ENCODE measurements at regions of chr18 and their contacts with region 1.

Region 1: GRCh38 chr18:5073026-5073944 is 123.8 kb downstream of the AKAIN1 start:
- DNase-seq: peak; percentile 32
- ATAC-seq: no peak
- H3K4me3 ChIP-seq: no peak overlapping the region
- H3K4me3 Mint-ChIP-seq: no peak overlapping the region
- H3K27ac ChIP-seq: no peak overlapping the region
- H3K27ac Mint-ChIP-seq: no peak overlapping the region
- H3K4me1 ChIP-seq: no peaks in the 10 kb centered on the region
- H3K4me1 Mint-ChIP-seq: no peaks in the 10 kb centered on the region
- H3K27me3 ChIP-seq: no peaks in the 10 kb centered on the region
- H3K27me3 Mint-ChIP-seq: peaks cover 4% of the 10 kb centered on the region
- CTCF ChIP-seq: peak; percentile 74

Region 2: DNA sequence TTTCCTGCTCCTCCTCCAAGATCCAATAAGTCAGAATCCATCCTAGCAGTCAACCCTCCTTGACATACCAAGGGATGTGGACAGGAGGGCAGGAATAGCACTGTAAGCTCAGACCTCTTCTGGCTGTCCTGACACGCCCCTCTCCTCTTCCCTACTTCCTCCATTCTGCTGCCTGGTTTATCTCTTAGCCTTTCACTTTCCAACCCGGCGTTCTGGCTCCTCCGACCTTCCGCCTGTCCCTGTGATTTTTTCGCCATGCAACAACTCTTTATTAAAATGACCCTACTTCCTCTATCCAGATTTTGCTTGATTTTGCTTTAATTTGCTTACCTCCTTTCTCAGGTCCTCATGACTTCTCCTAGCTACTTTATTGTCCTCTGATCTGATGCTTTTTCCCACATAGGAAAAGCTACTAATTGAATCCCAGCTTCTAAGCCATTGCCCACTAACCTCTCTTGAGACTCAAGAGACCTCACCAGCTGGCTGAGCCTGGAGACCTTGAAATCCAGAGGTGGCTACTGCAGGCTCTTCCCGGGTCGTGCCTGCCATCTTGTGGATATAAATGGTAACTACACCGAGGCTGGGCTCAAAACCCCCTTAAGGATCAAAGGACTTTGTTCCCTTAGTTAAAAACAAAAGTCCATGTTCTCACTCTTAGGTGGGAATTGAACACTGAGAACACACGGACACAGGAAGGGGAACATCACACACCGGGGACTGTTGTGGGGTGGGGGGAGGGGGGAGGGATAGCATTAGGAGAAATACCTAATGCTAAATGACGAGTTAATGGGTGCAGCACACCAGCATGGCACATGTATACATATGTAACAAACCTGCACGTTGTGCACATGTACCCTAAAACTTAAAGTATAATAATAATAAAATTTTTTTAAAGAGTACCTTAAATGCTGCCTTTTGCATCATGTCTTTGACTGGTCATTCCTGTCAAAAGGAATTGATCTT is 15.6 kb before region 1 on chr18:
- CTCF ChIA-PET with region 1: interaction called, 32 read pairs
- POLR2A ChIA-PET with region 1: no interaction called
- intact Hi-C with region 1: no loop called
- DNase-seq: peak; percentile 37
- ATAC-seq: peak; percentile 43
- H3K4me3 ChIP-seq: no peak overlapping the region
- H3K4me3 Mint-ChIP-seq: no peak overlapping the region
- H3K27ac ChIP-seq: no peak overlapping the region
- H3K27ac Mint-ChIP-seq: no peak overlapping the region
- H3K4me1 ChIP-seq: peaks cover 9% of the 10 kb centered on the region in 2 donors
- H3K4me1 Mint-ChIP-seq: peaks cover 16% of the 10 kb centered on the region
- H3K27me3 ChIP-seq: peaks cover 0 to 8% (median 0%) of the 10 kb centered on the region in 4 experiments
- H3K27me3 Mint-ChIP-seq: peaks cover 20% of the 10 kb centered on the region
- CTCF ChIP-seq: peak; percentile 72

Region 3: DNA sequence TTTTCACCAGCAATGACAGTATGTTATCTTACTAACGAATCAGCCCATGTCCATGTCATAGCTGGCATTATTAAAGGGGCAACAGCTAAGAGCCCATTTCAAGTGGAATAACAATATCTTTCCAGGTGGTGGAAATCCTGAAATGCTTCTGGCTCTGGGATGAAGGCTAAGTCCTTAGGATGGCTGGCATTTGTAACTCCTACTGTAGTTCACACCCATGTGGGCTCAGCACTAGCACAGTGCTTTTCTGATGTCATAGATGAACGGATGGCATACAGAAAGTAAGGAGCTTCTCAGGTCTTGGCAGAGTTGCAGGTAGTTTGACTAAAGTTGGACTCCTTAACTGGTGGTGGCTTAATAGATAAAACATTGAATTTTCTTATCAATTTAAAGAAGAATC is 812.1 kb after region 1 on chr18:
- CTCF ChIA-PET with region 1: no interaction called
- POLR2A ChIA-PET with region 1: no interaction called
- intact Hi-C with region 1: loop called (anchors 5 kb)
- DNase-seq: no peak
- ATAC-seq: no peak
- H3K4me3 ChIP-seq: no peak overlapping the region
- H3K4me3 Mint-ChIP-seq: no peak overlapping the region
- H3K27ac ChIP-seq: no peak overlapping the region
- H3K27ac Mint-ChIP-seq: no peak overlapping the region
- H3K4me1 ChIP-seq: peaks cover 3% of the 10 kb centered on the region in 2 donors
- H3K4me1 Mint-ChIP-seq: no peaks in the 10 kb centered on the region
- H3K27me3 ChIP-seq: peaks cover 0 to 24% (median 10%) of the 10 kb centered on the region in 4 experiments
- H3K27me3 Mint-ChIP-seq: peaks cover 31% of the 10 kb centered on the region
- CTCF ChIP-seq: no peak

Region 4: GRCh38 chr18:6482198-6482977 is 1409.1 kb after region 1 on chr18:
- CTCF ChIA-PET with region 1: no interaction called
- POLR2A ChIA-PET with region 1: no interaction called
- intact Hi-C with region 1: loop called (anchors 10 kb)
- DNase-seq: peak; percentile 35
- ATAC-seq: no peak
- H3K4me3 ChIP-seq: no peak overlapping the region
- H3K4me3 Mint-ChIP-seq: no peak overlapping the region
- H3K27ac ChIP-seq: no peak overlapping the region
- H3K27ac Mint-ChIP-seq: no peak overlapping the region
- H3K4me1 ChIP-seq: no peaks in the 10 kb centered on the region
- H3K4me1 Mint-ChIP-seq: peaks cover 1% of the 10 kb centered on the region
- H3K27me3 ChIP-seq: peaks cover 0 to 5% (median 0%) of the 10 kb centered on the region in 4 experiments
- H3K27me3 Mint-ChIP-seq: peaks cover 9% of the 10 kb centered on the region
- CTCF ChIP-seq: peak; percentile 60